ENCODE measurements at regions of chr11 and their contacts with region 1.

Region 1: GRCh38 chr11:17528181-17528691 is 16.0 kb downstream of the USH1C start:
- DNase-seq: peak; percentile 37 to 80 (median 75)
- H3K4me3 ChIP-seq: no peak overlapping the region
- H3K27ac ChIP-seq: no peak overlapping the region
- H3K4me1 ChIP-seq: no peaks in the 10 kb centered on the region
- H3K27me3 ChIP-seq: no peaks in the 10 kb centered on the region
- CTCF ChIP-seq: peak; percentile 66 to 78 (median 73)
- POLR2A ChIP-seq: no peak

Region 2: GRCh38 chr11:17164361-17165246 is 363.6 kb before region 1 on chr11:
- intact Hi-C with region 1: no loop called
- DNase-seq: no peak
- H3K4me3 ChIP-seq: no peak overlapping the region
- H3K27ac ChIP-seq: peak overlapping the region in 1 of 5 donors; percentile 25
- H3K4me1 ChIP-seq: peaks cover 35 to 62% of the 10 kb centered on the region in 2 donors
- H3K27me3 ChIP-seq: no peaks in the 10 kb centered on the region
- CTCF ChIP-seq: no peak
- POLR2A ChIP-seq: no peak

Region 3: GRCh38 chr11:17384002-17384511 is 144.2 kb before region 1 on chr11:
- intact Hi-C with region 1: loop called in 1 of 2 experiments (anchors 5 kb)
- DNase-seq: peak; percentile 77 to 89 (median 83)
- H3K4me3 ChIP-seq: no peak overlapping the region
- H3K27ac ChIP-seq: no peak overlapping the region
- H3K4me1 ChIP-seq: no peaks in the 10 kb centered on the region
- H3K27me3 ChIP-seq: no peaks in the 10 kb centered on the region
- CTCF ChIP-seq: peak; percentile 87 to 97 (median 92)
- POLR2A ChIP-seq: no peak

Region 4: GRCh38 chr11:17432002-17432401 is 96.2 kb before region 1 on chr11:
- intact Hi-C with region 1: no loop called
- DNase-seq: no peak
- H3K4me3 ChIP-seq: no peak overlapping the region
- H3K27ac ChIP-seq: no peak overlapping the region
- H3K4me1 ChIP-seq: no peaks in the 10 kb centered on the region
- H3K27me3 ChIP-seq: no peaks in the 10 kb centered on the region
- CTCF ChIP-seq: no peak
- POLR2A ChIP-seq: no peak